BJ (cell line): ENCODE measurements at regions of chr2 and their contacts with region 1.

Region 1: DNA sequence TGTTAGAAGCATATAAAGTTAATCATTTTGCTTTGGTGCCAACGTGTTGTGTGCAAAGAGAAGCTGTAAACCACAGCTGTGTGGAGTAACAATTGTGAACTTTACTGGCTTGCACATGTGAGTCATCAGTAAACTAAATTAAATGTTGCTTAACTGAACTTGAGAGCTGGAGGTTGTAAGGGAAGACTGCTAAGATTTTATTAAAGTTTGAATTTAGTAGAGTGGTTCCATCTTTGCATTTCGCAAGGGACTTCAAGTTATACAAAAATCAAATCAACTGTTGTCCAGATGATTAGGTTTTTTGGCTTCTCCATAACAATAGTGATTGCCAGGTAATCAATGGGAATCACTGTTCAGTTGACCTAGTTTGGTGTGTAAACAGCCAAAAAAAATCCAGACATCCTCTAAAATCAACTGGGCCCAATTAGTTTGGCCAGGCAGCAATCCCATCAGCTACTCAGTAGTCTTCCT is 247.4 kb downstream of the MYO3B start:
- DNase-seq: no peak
- H3K4me3 ChIP-seq: no peak overlapping the region
- H3K27me3 ChIP-seq: no peaks in the 10 kb centered on the region
- CTCF ChIP-seq: no peak

Region 2: DNA sequence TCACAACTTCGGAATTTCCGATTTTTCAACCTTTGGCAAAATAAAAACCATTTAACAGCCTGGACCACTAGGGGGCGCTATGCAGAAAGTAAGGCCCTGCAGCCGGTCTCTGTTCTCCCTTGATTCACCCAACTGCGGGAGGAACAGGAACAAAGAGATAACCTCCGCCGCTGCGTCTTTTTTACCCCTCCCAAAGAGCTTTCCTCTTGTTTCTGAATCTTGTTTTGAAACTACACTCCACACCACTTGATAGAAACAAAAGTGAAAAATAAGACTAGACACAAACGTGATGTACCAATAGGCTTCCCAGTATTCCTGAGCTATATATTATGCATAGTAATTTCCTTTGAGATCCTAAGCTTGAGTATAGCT is 16.2 kb before region 1 on chr2:
- CTCF ChIA-PET with region 1: interaction called, 25 read pairs
- POLR2A ChIA-PET with region 1: no interaction called
- DNase-seq: no peak
- H3K4me3 ChIP-seq: no peak overlapping the region
- H3K27me3 ChIP-seq: no peaks in the 10 kb centered on the region
- CTCF ChIP-seq: peak; percentile 85